Heart left ventricle (tissue), 16 donors: ENCODE measurements at regions of chr14 and their contacts with region 1.

Region 1: GRCh38 chr14:100654814-100655740 is 67.9 kb upstream of the BEGAIN start:
- DNase-seq: peak in 1 of 5 donors; percentile 72
- ATAC-seq: peak in 3 of 4 donors; percentile 54 to 72 (median 67)
- H3K4me3 ChIP-seq: no peak overlapping the region
- H3K27ac ChIP-seq: no peak overlapping the region
- H3K4me1 ChIP-seq: no peaks in the 10 kb centered on the region
- H3K27me3 ChIP-seq: peaks cover 13 to 52% (median 29%) of the 10 kb centered on the region in 9 donors
- CTCF ChIP-seq: peak; percentile 30 to 71 (median 58)
- POLR2A ChIP-seq: no peak

Region 2: GRCh38 chr14:100383727-100384158 is 271.3 kb before region 1 on chr14:
- intact Hi-C with region 1: loop called in 3 of 10 experiments (anchors 2 kb)
- DNase-seq: peak; percentile 34 to 77 (median 56)
- ATAC-seq: peak; percentile 64 to 78 (median 74)
- H3K4me3 ChIP-seq: no peak overlapping the region
- H3K27ac ChIP-seq: no peak overlapping the region
- H3K4me1 ChIP-seq: peaks cover 0 to 9% (median 1%) of the 10 kb centered on the region in 12 donors
- H3K27me3 ChIP-seq: no peaks in the 10 kb centered on the region
- CTCF ChIP-seq: peak; percentile 66 to 85 (median 77)
- POLR2A ChIP-seq: no peak

Region 3: DNA sequence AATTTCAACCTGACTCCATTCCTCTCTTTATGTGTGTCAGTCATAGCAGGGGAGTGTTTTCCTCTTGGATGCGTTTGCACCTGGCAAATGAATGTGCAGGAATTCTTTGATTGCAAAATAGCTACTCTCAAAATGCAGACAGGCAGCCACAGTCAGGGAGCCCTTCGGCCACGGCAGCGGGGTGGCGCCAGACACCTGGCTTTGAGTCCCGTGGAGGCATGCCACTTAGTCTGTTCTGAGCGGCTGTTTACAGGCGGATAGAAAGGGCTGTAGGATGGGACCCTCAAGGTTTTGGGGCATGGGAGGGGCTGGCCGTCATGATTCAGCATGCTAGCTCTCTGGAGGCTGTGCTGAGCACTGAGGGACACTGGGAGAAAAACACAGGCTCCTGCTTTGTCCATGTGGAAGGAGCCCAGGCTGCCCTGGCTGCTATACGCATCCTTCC is 214.9 kb before region 1 on chr14:
- intact Hi-C with region 1: loop called in 1 of 10 experiments (anchors 10 kb)
- DNase-seq: peak; percentile 26 to 73 (median 67)
- ATAC-seq: peak; percentile 83 to 92 (median 88)
- H3K4me3 ChIP-seq: peak overlapping the region in 2 of 12 donors; percentile 4 to 28
- H3K27ac ChIP-seq: peak overlapping the region in 11 of 12 donors; percentile 8 to 72 (median 40)
- H3K4me1 ChIP-seq: peaks cover 0 to 23% (median 19%) of the 10 kb centered on the region in 12 donors
- H3K27me3 ChIP-seq: no peaks in the 10 kb centered on the region
- CTCF ChIP-seq: peak; percentile 23 to 78 (median 62)
- POLR2A ChIP-seq: no peak

Region 4: GRCh38 chr14:100547633-100548294 is 107.3 kb before region 1 on chr14:
- intact Hi-C with region 1: no loop called
- DNase-seq: peak; percentile 30 to 84 (median 68)
- ATAC-seq: peak; percentile 50 to 80 (median 61)
- H3K4me3 ChIP-seq: peak overlapping the region in 1 of 12 donors; percentile 1
- H3K27ac ChIP-seq: peak overlapping the region in 2 of 12 donors; percentile 17 to 71
- H3K4me1 ChIP-seq: peaks cover 0 to 26% (median 8%) of the 10 kb centered on the region in 12 donors
- H3K27me3 ChIP-seq: peaks cover 0 to 8% (median 0%) of the 10 kb centered on the region in 9 donors
- CTCF ChIP-seq: no peak
- POLR2A ChIP-seq: no peak

Region 5: DNA sequence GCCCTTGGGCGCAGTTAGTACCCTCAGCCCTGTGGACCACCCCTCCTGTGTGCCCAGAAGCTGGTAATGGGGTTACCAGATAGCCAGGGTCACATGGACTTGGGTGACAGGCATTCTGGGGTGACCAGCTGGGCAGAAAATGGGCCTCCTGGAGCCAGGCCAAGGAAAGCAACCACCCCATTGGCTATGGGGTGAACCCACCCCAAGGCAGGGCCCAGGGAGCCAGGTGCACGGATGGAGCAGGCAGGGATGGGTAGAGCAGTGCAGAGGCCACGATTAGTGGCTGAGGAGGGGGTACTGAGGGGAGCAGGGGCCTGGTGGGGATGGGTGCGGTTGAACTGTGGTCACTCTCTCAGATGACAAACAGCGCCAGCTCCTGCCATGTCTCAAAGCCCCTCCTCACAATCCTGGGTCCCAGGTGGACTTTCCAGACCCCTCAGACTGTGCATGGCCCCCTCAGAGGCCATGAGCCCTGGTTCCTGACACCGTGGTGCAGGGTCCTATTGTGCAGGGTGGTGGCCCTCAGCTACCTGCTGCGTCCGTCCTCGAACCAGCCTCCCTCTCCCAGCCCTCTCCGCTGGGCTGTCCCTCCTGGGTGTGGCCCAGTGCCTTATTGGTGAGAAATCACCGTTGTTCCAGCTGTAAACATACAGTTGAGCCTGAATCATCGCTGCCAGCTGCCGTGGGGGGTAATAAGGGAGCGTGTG is 44.4 kb before region 1 on chr14:
- intact Hi-C with region 1: no loop called
- DNase-seq: peak in 1 of 5 donors; percentile 14
- ATAC-seq: no peak
- H3K4me3 ChIP-seq: no peak overlapping the region
- H3K27ac ChIP-seq: no peak overlapping the region
- H3K4me1 ChIP-seq: no peaks in the 10 kb centered on the region
- H3K27me3 ChIP-seq: peaks cover 0 to 51% (median 7%) of the 10 kb centered on the region in 9 donors
- CTCF ChIP-seq: no peak
- POLR2A ChIP-seq: no peak

Region 6: DNA sequence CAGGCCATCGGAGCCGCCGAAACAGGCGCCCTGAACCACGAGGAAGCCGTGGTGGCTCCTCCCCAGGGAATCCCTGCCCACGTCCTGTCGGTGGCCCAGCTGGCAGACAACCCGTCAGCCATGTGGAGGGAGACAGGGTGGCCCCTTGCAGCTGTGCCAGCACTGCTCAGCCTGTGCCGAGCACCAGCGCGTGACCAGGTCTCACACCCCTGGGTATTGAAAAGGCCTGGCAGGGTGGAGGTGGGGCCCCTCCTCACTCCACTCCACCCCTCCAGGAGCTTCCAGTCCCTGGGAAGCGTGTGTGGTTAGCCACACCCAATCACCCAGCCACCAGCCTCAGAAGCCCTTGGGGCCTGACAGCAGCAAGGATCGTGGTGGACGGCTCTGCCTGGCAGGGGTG is 59.2 kb after region 1 on chr14:
- intact Hi-C with region 1: no loop called
- DNase-seq: no peak
- ATAC-seq: peak in 3 of 4 donors; percentile 6 to 44 (median 33)
- H3K4me3 ChIP-seq: no peak overlapping the region
- H3K27ac ChIP-seq: no peak overlapping the region
- H3K4me1 ChIP-seq: peaks cover 0 to 18% (median 5%) of the 10 kb centered on the region in 12 donors
- H3K27me3 ChIP-seq: peaks cover 0 to 33% (median 6%) of the 10 kb centered on the region in 9 donors
- CTCF ChIP-seq: no peak
- POLR2A ChIP-seq: no peak